ENCODE measurements at regions of chr1 and their contacts with region 1.

Region 1: GRCh38 chr1:152001391-152002249 is 8.0 kb upstream of the S100A10 start:
- DNase-seq: peak; percentile 62
- CTCF ChIP-seq: peak; percentile 87

Region 2: GRCh38 chr1:150955280-150955679 is 1046.3 kb before region 1 on chr1:
- CTCF ChIA-PET with region 1: no interaction called
- POLR2A ChIA-PET with region 1: no interaction called
- DNase-seq: no peak
- CTCF ChIP-seq: no peak

Region 3: GRCh38 chr1:151881456-151881855 is 120.2 kb before region 1 on chr1:
- CTCF ChIA-PET with region 1: interaction called, 12 read pairs
- POLR2A ChIA-PET with region 1: no interaction called
- DNase-seq: no peak
- CTCF ChIP-seq: peak; percentile 2

Region 4: GRCh38 chr1:151909150-151910149 is 92.2 kb before region 1 on chr1 and contains the start of gene THEM4:
- CTCF ChIA-PET with region 1: interaction called, 18 read pairs
- POLR2A ChIA-PET with region 1: no interaction called
- DNase-seq: peak; percentile 97
- CTCF ChIP-seq: peak; percentile 42

Region 5: GRCh38 chr1:151968058-151968457 is 33.6 kb before region 1 on chr1:
- CTCF ChIA-PET with region 1: interaction called, 131 read pairs
- POLR2A ChIA-PET with region 1: no interaction called
- DNase-seq: peak; percentile 57
- CTCF ChIP-seq: peak; percentile 69

Region 6: GRCh38 chr1:151989211-151989862 is 12.3 kb before region 1 on chr1:
- CTCF ChIA-PET with region 1: interaction called, 134 read pairs
- POLR2A ChIA-PET with region 1: no interaction called
- DNase-seq: no peak
- CTCF ChIP-seq: no peak

Measured in GM10248 (cell line).